H1 (cell line): ENCODE measurements at regions of chr10 and their contacts with region 1.

Region 1: GRCh38 chr10:96222441-96222840 is 48.9 kb downstream of the BLNK start:
- DNase-seq: peak; percentile 25 to 57
- H3K4me3 ChIP-seq: peak overlapping the region in 1 of 4 experiments; percentile 20; a peak in 1 of 8 replicates
- H3K27ac ChIP-seq: no peak overlapping the region
- H3K4me1 ChIP-seq: peaks cover 9 to 22% (median 12%) of the 10 kb centered on the region in 4 experiments; a peak in 6 of 7 replicates
- H3K27me3 ChIP-seq: no peaks in the 10 kb centered on the region
- CTCF ChIP-seq: peak in 1 of 3 experiments; percentile 28; a peak in 1 of 4 replicates
- EP300 ChIP-seq: no peak
- POLR2A ChIP-seq: no peak
- RAD21 ChIP-seq: peak; percentile 18 to 26; a peak in 3 of 4 replicates

Region 2: GRCh38 chr10:96017191-96017687 is 205.2 kb before region 1 on chr10:
- CTCF ChIA-PET with region 1: interaction called, 11 read pairs
- POLR2A ChIA-PET with region 1: no interaction called
- DNase-seq: peak in 1 of 2 experiments; percentile 54
- H3K4me3 ChIP-seq: no peak overlapping the region
- H3K27ac ChIP-seq: no peak overlapping the region
- H3K4me1 ChIP-seq: no peaks in the 10 kb centered on the region
- H3K27me3 ChIP-seq: no peaks in the 10 kb centered on the region
- CTCF ChIP-seq: peak in 2 of 3 experiments; percentile 62 to 70; a peak in 3 of 4 replicates
- EP300 ChIP-seq: no peak
- POLR2A ChIP-seq: no peak
- RAD21 ChIP-seq: peak; percentile 83 to 86

Region 3: DNA sequence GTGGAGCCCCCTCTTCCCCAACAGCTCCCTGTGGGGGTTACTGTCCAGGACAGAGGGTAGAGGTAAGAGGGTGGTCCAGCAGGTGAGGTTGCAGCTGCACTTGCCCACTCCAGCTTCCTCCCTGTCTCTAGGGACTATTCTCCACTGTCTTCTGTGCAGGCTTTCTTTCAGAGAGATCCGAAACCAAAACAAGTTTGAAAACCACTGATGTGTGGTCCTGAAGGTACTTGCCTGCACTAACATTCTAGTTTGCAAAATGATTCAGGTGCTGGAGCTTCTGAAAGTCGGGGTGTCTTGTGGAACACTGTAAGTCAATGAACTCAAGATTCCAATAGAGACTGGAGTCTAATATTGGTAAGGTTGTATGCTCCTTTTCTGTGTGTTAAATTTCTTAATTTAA is 14.2 kb before region 1 on chr10:
- CTCF ChIA-PET with region 1: interaction called, 10 read pairs
- POLR2A ChIA-PET with region 1: interaction called, 4 read pairs
- DNase-seq: no peak
- H3K4me3 ChIP-seq: no peak overlapping the region
- H3K27ac ChIP-seq: no peak overlapping the region
- H3K4me1 ChIP-seq: peaks cover 4 to 7% (median 5%) of the 10 kb centered on the region in 4 experiments; a peak in 6 of 7 replicates
- H3K27me3 ChIP-seq: no peaks in the 10 kb centered on the region
- CTCF ChIP-seq: no peak
- EP300 ChIP-seq: no peak
- POLR2A ChIP-seq: no peak
- RAD21 ChIP-seq: no peak